ENCODE measurements at regions of chr20 and their contacts with region 1.

Region 1: DNA sequence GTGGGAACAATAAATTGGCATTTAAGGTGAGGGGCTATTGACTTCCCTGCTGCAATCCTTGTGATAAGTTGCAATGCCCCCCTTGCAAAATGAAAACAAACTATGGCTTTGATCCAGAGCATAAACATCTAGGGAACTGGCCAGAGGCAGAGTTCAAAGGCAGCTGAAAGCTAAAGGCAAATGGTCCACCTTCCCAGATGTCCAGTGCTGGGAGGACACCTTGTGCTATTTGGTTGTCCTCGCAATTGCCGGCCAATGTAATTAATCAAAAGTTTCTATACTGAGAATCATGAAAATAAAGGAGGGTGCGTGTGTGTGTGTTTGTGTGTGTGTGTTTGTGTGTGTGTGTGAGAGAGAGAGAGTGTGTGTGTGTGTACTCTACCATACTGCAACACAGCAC is 337.4 kb downstream of the CBLN4 start:
- DNase-seq: no peak
- H3K4me3 ChIP-seq: no peak overlapping the region
- CTCF ChIP-seq: no peak

Region 2: GRCh38 chr20:55610756-55611155 is 57.2 kb before region 1 on chr20:
- in situ Hi-C with region 1: no loop called
- DNase-seq: no peak
- H3K4me3 ChIP-seq: no peak overlapping the region
- CTCF ChIP-seq: no peak

Region 3: GRCh38 chr20:55696520-55696919 is 28.6 kb after region 1 on chr20:
- in situ Hi-C with region 1: loop called (anchors 5 kb)
- DNase-seq: no peak
- H3K4me3 ChIP-seq: no peak overlapping the region
- CTCF ChIP-seq: no peak

Region 4: DNA sequence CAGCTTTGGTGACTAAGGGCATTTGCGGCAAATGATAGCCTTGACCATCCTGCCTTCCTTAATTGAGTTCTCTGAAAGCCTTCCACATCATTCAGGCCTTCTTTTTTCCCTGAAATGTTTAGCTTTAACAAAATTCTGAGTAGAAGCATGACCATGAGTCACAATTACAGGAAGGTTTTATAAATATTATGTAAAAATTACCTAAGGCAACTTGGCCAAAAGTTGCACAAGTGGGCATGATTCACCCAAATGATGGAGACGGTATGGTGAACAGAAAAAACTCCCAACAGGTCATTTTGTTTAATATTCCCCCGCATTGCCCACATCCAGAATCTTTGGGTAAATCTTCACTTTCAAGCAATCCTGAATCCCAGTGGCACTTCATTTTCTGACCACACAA is 617.5 kb after region 1 on chr20:
- in situ Hi-C with region 1: no loop called
- DNase-seq: no peak
- H3K4me3 ChIP-seq: no peak overlapping the region
- CTCF ChIP-seq: no peak

Measured in astrocyte of the cerebellum (primary cell).